ENCODE measurements at regions of chr20 and their contacts with region 1.

Region 1: DNA sequence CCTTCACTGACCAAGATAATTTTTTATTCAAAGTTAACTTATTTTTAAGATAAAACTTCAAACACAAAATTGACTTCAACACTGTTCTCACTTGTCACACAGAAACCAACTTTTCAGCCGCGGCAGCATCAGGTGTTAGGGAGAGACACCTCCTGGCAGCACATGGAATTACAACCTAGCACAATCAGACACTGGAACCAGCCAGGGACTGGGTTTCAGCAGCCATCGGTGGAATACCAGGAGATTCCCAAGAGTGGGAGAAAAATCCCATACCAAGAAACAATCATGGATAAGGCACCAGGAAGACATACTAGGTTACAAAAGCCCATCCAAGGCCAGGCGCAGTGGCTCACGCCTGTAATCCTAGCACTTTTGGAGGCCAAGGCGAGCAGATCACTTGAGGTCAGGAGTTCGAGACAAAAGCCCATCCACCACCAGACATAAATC is 70.0 kb downstream of the SNX5 start:
- DNase-seq: peak; percentile 55 to 82 (median 80)
- H3K4me3 ChIP-seq: no peak overlapping the region
- H3K27ac ChIP-seq: no peak overlapping the region
- H3K4me1 ChIP-seq: peaks cover 5 to 26% (median 15%) of the 10 kb centered on the region in 4 experiments
- H3K27me3 ChIP-seq: no peaks in the 10 kb centered on the region

Region 2: GRCh38 chr20:17759241-17759848 is 139.2 kb before region 1 on chr20:
- CTCF ChIA-PET with region 1: no interaction called
- POLR2A ChIA-PET with region 1: no interaction called
- DNase-seq: no peak
- H3K4me3 ChIP-seq: no peak overlapping the region
- H3K27ac ChIP-seq: no peak overlapping the region
- H3K4me1 ChIP-seq: peaks cover 0 to 4% (median 0%) of the 10 kb centered on the region in 4 experiments
- H3K27me3 ChIP-seq: no peaks in the 10 kb centered on the region

Region 3: GRCh38 chr20:17885544-17885943 is 13.0 kb before region 1 on chr20:
- CTCF ChIA-PET with region 1: interaction called, 13 read pairs
- POLR2A ChIA-PET with region 1: interaction called, 4 read pairs
- DNase-seq: peak in 2 of 3 donors; percentile 59 to 61
- H3K4me3 ChIP-seq: no peak overlapping the region
- H3K27ac ChIP-seq: no peak overlapping the region
- H3K4me1 ChIP-seq: peaks cover 0 to 7% (median 2%) of the 10 kb centered on the region in 4 experiments
- H3K27me3 ChIP-seq: no peaks in the 10 kb centered on the region

Region 4: GRCh38 chr20:18056174-18057100 is 157.9 kb after region 1 on chr20:
- CTCF ChIA-PET with region 1: no interaction called
- POLR2A ChIA-PET with region 1: no interaction called
- DNase-seq: peak in 2 of 3 donors; percentile 33 to 50
- H3K4me3 ChIP-seq: peak overlapping the region; percentile 23 to 72 (median 60)
- H3K27ac ChIP-seq: no peak overlapping the region
- H3K4me1 ChIP-seq: peaks cover 0 to 42% (median 38%) of the 10 kb centered on the region in 4 experiments
- H3K27me3 ChIP-seq: peaks cover 10 to 89% (median 38%) of the 10 kb centered on the region in 5 experiments

Measured in common myeloid progenitor, CD34-positive (primary cell).